ENCODE measurements at regions of chr1 and their contacts with region 1.

Region 1: DNA sequence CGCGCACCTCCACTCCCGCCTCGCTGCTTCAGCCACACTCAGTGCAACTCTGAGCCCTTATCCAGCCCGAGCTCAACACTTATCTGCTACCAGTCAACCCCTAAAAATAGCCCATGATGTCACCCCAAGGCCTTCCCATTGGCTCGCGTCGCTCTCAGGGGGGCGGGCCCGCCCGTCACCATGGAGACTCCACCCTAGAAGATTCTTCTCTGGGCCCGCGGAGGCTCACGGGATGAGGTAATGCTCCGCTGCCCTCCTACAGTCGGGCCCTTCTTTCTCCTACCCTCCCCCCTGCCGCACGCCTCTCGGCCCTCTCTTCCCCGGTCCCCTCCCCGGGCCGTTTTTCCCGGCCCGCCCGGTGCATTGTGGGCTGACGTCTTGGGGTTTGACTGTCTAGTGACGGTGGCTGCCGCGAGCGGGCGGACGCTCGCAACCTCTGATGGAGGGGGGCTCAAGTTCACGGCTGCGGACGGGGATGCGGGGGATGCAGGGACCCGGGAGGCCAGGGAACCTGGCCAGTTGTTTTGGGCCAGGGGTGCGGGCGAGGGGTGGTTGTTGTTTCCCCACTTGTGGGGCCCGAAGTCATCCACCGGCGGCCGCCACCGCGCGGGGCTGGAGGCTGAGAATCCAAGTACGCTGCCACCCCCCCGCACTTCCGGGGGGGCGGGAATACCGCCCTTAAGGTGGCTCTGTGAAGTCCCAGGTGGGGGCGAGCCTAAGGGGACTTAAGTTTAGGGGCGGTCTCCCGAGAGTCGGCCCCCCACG is at the start of gene JUN:
- DNase-seq: peak; percentile 97 to 100 (median 98)
- H3K4me3 ChIP-seq: peak within 1 kb of the TSS; percentile 92
- H3K4me3 Mint-ChIP-seq: peak within 1 kb of the TSS; percentile 86 to 97 (median 92)
- H3K27ac ChIP-seq: peak within 1 kb of the TSS; percentile 99
- H3K27ac Mint-ChIP-seq: peak within 1 kb of the TSS; percentile 95 to 100 (median 100)
- H3K4me1 ChIP-seq: peaks cover 19% of the 10 kb centered on the region
- H3K4me1 Mint-ChIP-seq: peaks cover 25 to 60% (median 43%) of the 10 kb centered on the region in 3 donors
- H3K27me3 ChIP-seq: no peaks in the 10 kb centered on the region
- H3K27me3 Mint-ChIP-seq: peaks cover 0 to 19% of the 10 kb centered on the region in 2 donors
- total RNA-seq, gene JUN: 25.5 to 27.7 TPM

Region 2: GRCh38 chr1:58755468-58755872 is 28.7 kb before region 1 on chr1:
- CTCF ChIA-PET with region 1: interaction called, 8 read pairs
- POLR2A ChIA-PET with region 1: interaction called, 20 read pairs
- DNase-seq: peak; percentile 14 to 74 (median 50)
- H3K4me3 ChIP-seq: no peak overlapping the region
- H3K4me3 Mint-ChIP-seq: peak overlapping the region; percentile 8 to 84 (median 81)
- H3K27ac ChIP-seq: no peak overlapping the region
- H3K27ac Mint-ChIP-seq: peak overlapping the region; percentile 62 to 92 (median 87)
- H3K4me1 ChIP-seq: peaks cover 42% of the 10 kb centered on the region
- H3K4me1 Mint-ChIP-seq: peaks cover 52 to 61% (median 58%) of the 10 kb centered on the region in 3 donors
- H3K27me3 ChIP-seq: no peaks in the 10 kb centered on the region
- H3K27me3 Mint-ChIP-seq: no peaks in the 10 kb centered on the region

Region 3: GRCh38 chr1:58903514-58904298 is 119.5 kb after region 1 on chr1:
- CTCF ChIA-PET with region 1: interaction called, 3 read pairs
- POLR2A ChIA-PET with region 1: interaction called, 18 read pairs
- DNase-seq: peak; percentile 56 to 76 (median 60)
- H3K4me3 ChIP-seq: peak overlapping the region; percentile 53
- H3K4me3 Mint-ChIP-seq: peak overlapping the region; percentile 74 to 91 (median 83)
- H3K27ac ChIP-seq: peak overlapping the region; percentile 27
- H3K27ac Mint-ChIP-seq: peak overlapping the region; percentile 50 to 96 (median 89)
- H3K4me1 ChIP-seq: peaks cover 11% of the 10 kb centered on the region
- H3K4me1 Mint-ChIP-seq: peaks cover 16 to 23% (median 19%) of the 10 kb centered on the region in 3 donors
- H3K27me3 ChIP-seq: no peaks in the 10 kb centered on the region
- H3K27me3 Mint-ChIP-seq: no peaks in the 10 kb centered on the region

Region 4: GRCh38 chr1:59032228-59032627 is 248.1 kb after region 1 on chr1:
- CTCF ChIA-PET with region 1: no interaction called
- POLR2A ChIA-PET with region 1: interaction called, 19 read pairs
- DNase-seq: no peak
- H3K4me3 ChIP-seq: no peak overlapping the region
- H3K4me3 Mint-ChIP-seq: no peak overlapping the region
- H3K27ac ChIP-seq: no peak overlapping the region
- H3K27ac Mint-ChIP-seq: no peak overlapping the region
- H3K4me1 ChIP-seq: no peaks in the 10 kb centered on the region
- H3K4me1 Mint-ChIP-seq: no peaks in the 10 kb centered on the region
- H3K27me3 ChIP-seq: no peaks in the 10 kb centered on the region
- H3K27me3 Mint-ChIP-seq: peaks cover 0 to 2% of the 10 kb centered on the region in 2 donors

Region 5: DNA sequence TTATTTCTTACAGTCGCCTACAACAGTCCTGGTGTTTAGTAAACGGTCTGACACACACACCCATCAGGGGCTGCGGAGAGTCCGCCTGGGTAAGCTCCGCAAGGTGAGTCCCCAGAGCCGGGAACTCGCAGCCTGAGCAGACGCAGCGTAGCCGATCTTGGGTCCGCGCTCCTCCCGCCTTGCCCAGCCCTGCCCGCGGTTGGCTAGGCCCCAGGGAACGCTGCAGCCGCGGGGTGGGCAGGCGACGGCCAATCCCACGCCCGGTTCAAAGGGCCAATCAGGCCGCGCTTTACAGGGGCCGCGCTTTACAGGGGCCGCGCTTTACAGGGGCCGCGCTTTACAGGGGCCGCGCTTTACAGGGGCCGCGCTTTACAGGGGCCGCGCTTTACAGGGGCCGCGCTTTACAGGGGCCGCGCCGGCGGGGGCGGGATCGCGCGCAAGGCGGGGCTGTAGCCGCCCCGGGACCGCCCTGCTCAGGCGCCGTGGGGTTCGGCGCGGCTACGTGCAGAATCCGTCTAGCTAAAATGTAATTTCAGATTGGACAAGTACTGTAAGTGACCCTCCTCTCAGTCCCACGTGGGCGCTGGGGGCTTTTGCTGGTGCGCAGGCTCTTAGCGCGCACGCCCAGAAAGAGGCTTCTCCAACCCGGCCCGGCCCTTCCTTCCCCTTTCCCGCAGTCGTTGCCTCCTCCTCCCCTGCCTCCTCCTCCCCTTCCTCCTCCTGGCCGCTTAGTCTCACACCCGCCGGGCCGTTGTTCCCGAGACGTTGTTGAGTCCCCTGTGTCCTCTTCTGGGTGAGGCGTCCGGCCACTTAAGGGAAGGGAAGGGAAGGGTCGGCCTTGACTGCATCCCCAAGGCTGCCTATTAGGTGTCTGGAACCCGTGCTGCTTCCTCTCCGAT is 512.4 kb after region 1 on chr1 and contains the start of gene FGGY:
- CTCF ChIA-PET with region 1: interaction called, 3 read pairs
- POLR2A ChIA-PET with region 1: interaction called, 27 read pairs
- DNase-seq: peak; percentile 78 to 93 (median 88)
- H3K4me3 ChIP-seq: peak within 1 kb of the TSS; percentile 81
- H3K4me3 Mint-ChIP-seq: peak within 1 kb of the TSS; percentile 82 to 97 (median 90)
- H3K27ac ChIP-seq: peak within 1 kb of the TSS; percentile 82
- H3K27ac Mint-ChIP-seq: peak within 1 kb of the TSS; percentile 91 to 99 (median 95)
- H3K4me1 ChIP-seq: peaks cover 34% of the 10 kb centered on the region
- H3K4me1 Mint-ChIP-seq: peaks cover 26 to 38% (median 27%) of the 10 kb centered on the region in 3 donors
- H3K27me3 ChIP-seq: no peaks in the 10 kb centered on the region
- H3K27me3 Mint-ChIP-seq: no peaks in the 10 kb centered on the region
- total RNA-seq, gene FGGY: 6.6 to 7.9 TPM